ENCODE measurements at regions of chr18 and their contacts with region 1.

Region 1: DNA sequence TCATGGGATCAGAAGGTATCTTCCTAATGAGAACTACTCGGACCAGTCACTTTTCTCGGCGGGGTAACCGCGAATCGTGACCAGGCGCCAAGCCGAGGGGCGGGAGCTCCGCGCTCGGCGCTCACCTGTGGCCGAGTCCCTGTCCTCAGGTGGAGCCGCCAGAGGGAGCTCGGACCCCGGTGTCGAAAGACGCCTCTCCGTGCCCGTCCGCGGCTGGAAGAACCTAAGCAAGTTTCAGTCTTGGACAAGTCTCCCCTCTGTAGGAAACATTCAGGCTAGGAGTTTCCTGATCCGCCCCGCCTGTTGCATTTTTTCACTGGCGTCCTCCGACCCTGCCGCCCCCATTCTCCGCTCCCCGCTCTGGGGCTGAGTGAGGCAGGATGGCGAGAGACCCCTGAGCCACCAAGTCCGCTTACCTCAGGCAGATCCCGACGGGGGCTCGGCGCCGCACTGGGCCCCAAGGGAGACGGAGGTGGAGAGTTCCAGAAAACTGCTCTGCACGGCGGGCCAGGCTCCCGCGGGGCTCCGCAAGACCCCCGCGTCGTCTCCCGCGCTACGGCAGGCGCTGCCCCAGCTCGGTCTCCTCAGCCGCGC is 478 bp downstream of the DSEL start:
- DNase-seq: peak; percentile 35 to 90
- H3K4me3 ChIP-seq: peak overlapping the region; percentile 82 to 98
- H3K27ac ChIP-seq: peak overlapping the region; percentile 94 to 98
- H3K4me1 ChIP-seq: peaks cover 0 to 9% of the 10 kb centered on the region in 2 donors
- H3K27me3 ChIP-seq: no peaks in the 10 kb centered on the region
- CTCF ChIP-seq: peak; percentile 59 to 86 (median 60)

Region 2: DNA sequence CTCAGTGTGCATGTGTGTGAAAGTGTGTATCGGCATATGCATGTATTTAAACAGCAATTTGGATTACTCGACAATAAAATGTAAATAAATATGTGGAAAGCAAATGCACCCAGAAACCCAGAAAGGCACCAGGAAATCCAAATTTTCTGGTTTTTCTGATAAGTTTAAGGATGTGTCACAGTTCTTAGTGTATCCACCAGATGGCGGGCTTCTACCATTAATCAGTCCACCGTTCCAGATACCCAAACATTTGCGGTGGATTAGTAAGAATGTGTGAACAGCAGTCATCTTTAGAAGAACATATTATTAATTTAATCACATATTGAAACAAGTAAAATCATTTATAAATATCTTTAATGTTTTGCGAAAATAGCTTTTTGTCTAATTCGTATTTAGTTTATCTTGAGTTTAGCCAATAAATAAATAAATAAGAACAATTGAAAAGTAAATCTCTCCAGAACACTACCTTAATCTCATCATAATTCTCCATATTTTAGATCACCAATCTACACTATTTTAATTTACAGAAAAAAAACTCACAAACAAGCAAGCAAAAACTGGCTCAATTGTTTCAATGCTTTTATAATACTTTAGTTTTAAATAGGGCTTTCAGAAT is 298.4 kb before region 1 on chr18:
- intact Hi-C with region 1: loop called (anchors 2 kb)
- DNase-seq: peak in 1 of 2 donors; percentile 75
- H3K4me3 ChIP-seq: no peak overlapping the region
- H3K27ac ChIP-seq: no peak overlapping the region
- H3K4me1 ChIP-seq: no peaks in the 10 kb centered on the region
- H3K27me3 ChIP-seq: no peaks in the 10 kb centered on the region
- CTCF ChIP-seq: peak; percentile 61 to 79 (median 79)

Region 3: GRCh38 chr18:67265464-67266245 is 250.4 kb before region 1 on chr18:
- intact Hi-C with region 1: loop called (anchors 2 kb)
- DNase-seq: no peak
- H3K4me3 ChIP-seq: no peak overlapping the region
- H3K27ac ChIP-seq: peak overlapping the region; percentile 74 to 79
- H3K4me1 ChIP-seq: peaks cover 0 to 20% of the 10 kb centered on the region in 2 donors
- H3K27me3 ChIP-seq: no peaks in the 10 kb centered on the region
- CTCF ChIP-seq: no peak

Region 4: DNA sequence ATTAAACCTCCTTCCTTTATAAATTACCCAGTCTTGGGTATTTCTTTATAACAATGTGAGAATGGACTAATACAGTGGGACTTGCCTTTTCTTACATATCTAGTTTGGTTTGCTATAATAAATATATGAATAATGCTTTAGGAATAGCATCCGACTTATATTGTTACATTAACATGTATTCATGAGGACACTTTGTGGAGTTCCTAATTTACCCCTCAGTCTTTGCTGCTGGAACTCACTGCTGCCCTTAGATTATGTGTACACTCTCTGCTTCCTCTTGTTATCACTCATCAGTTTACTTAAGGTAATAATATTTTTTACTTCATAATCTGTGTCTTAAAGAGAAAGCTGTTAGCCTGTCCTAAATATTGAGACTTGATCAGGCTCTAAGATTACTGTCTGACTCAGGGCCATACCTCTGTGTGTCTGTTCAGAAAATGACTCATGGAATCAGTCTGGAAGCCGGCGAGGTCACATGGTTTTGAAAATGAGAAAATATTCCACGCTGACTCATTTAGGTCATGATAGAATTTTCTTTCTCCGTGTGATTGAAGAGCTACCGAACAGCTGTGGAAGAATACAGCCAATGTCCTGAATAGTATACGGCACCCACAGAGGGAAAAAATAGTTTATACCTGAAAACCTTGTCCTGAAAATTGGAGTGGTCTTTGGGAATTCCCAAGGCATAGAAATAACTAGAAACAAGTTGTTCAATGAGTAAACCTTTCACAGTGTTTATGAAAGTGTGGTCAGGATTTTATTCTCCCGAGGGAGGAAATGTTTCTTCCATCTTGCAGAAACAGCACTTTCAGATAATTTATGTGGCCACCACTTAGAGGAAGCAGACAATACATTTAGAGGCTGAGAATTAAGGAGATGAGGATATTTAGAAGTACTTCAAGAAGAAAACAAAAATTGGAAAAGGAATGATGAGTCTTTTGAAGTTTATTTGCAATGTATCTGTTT is 155.9 kb before region 1 on chr18:
- intact Hi-C with region 1: loop called (anchors 5 kb)
- DNase-seq: peak in 1 of 2 donors; percentile 86
- H3K4me3 ChIP-seq: peak overlapping the region; percentile 32 to 55
- H3K27ac ChIP-seq: peak overlapping the region; percentile 70 to 82
- H3K4me1 ChIP-seq: peaks cover 0 to 3% of the 10 kb centered on the region in 2 donors
- H3K27me3 ChIP-seq: no peaks in the 10 kb centered on the region
- CTCF ChIP-seq: no peak

Region 5: GRCh38 chr18:67483952-67484351 is 32.1 kb before region 1 on chr18:
- intact Hi-C with region 1: no loop called
- DNase-seq: no peak
- H3K4me3 ChIP-seq: no peak overlapping the region
- H3K27ac ChIP-seq: no peak overlapping the region
- H3K4me1 ChIP-seq: peaks cover 0 to 3% of the 10 kb centered on the region in 2 donors
- H3K27me3 ChIP-seq: no peaks in the 10 kb centered on the region
- CTCF ChIP-seq: no peak

Region 6: DNA sequence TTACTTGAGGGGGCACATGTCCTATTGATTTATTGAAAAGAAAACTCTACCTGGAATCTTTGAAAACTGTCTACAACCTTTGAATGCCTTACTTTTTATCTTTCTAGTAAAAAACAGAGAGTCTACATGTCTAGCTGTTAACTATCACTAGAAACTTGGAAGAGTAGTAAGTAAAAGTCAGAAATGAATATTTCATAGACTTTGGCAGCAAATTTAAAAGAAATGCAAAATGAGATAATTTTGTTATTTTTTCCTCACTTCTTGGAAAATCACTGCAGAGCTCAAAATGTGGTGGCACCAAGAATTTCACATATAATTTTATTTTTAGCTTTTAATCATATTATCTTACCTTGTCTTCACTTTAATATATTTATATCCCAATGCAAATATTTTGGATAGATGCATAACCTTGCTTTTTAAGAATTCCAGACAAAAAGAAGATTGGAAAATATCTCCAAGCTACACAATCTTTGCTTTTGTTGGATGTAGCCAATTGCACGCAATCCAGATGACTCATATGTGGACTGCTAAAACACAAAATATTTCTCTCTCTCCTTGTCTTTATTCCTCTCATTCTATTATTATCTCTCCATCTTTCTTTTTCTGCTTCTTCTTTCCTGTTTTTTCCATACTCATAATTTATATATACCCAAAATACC is 92.7 kb after region 1 on chr18:
- intact Hi-C with region 1: loop called (anchors 5 kb)
- DNase-seq: no peak
- H3K4me3 ChIP-seq: no peak overlapping the region
- H3K27ac ChIP-seq: peak overlapping the region in 1 of 2 donors; percentile 46
- H3K4me1 ChIP-seq: peaks cover 0 to 4% of the 10 kb centered on the region in 2 donors
- H3K27me3 ChIP-seq: no peaks in the 10 kb centered on the region
- CTCF ChIP-seq: no peak

Region 7: DNA sequence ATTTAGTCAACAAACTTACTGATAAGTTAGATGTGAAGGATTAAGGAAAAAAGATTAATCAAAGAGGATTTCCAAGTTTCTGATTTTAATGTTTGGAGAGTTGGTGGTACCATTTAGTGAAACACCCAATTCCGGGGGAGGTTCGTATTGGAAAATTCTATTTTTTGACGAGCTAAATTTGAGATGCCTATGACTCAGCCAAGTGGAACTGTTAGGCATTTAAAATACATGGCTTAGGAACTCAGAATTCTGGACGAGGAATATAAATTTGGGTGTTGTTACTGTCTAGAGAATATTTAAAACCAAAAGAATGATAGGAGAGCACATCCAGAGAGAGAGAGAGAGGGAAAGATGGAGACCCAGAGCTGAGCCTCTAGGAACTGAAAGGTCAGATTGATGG is 1095.3 kb after region 1 on chr18:
- intact Hi-C with region 1: loop called (anchors 10 kb)
- DNase-seq: no peak
- H3K4me3 ChIP-seq: no peak overlapping the region
- H3K27ac ChIP-seq: peak overlapping the region; percentile 69 to 80
- H3K4me1 ChIP-seq: peaks cover 0 to 4% of the 10 kb centered on the region in 2 donors
- H3K27me3 ChIP-seq: no peaks in the 10 kb centered on the region
- CTCF ChIP-seq: no peak

Region 8: DNA sequence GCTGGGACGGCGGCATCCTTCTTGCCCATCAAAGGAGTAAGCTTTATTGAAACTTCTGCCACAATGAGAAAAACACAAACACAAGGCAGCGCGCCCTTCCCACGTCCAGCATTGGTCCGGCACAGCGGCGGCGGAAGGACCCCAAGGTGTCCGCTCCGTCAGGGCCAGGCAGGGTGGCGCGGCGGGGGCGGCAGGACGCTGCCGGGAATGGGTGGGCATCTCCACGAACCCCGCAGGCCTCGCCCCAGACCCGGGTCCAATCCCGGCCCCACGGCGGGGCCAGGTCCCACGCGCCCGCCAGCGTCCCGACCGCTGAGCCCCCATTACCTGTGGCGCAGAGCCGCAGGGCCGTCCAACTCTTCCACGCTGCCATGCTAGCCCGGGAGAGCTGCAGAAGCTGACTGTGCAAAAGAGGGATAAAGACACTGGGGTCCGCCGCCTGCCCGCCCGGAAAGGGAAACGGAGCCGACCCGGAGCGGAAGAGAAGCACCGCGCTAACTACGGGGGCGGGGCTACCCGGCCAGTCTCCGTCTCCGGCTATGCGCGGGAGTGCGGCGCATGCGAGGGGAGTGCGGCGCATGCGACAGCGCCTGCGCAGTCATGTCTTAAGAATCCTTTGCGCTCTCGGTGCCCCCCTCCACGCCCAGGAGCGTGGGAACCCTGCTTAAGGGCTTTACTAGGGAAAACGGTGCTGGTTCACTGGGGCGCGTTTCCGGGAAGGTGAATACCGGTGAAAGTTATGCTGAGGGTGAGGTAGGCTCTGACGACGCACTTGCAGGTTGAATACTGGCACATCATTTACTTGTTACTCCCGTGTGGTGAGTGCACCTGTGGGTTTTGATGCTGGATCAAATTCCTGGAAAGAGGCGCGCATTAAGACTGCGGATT is 1198.8 kb after region 1 on chr18 and contains the start of gene TMX3:
- intact Hi-C with region 1: loop called (anchors 5 kb)
- DNase-seq: peak; percentile 62 to 94
- H3K4me3 ChIP-seq: peak within 1 kb of the TSS; percentile 66 to 98
- H3K27ac ChIP-seq: peak within 1 kb of the TSS; percentile 40 to 76
- H3K4me1 ChIP-seq: peaks cover 0 to 8% of the 10 kb centered on the region in 2 donors
- H3K27me3 ChIP-seq: no peaks in the 10 kb centered on the region
- CTCF ChIP-seq: no peak
- total RNA-seq, gene TMX3: 12.9 TPM

Measured in ascending aorta (tissue), 2 donors.